Common myeloid progenitor, CD34-positive (primary cell): ENCODE measurements at regions of chr22 and their contacts with region 1.

Region 1: GRCh38 chr22:43346521-43346929 is 3.4 kb upstream of the SCUBE1 start:
- DNase-seq: peak; percentile 50 to 59 (median 54)
- H3K4me3 ChIP-seq: no peak overlapping the region
- H3K27ac ChIP-seq: no peak overlapping the region
- H3K4me1 ChIP-seq: peaks cover 0 to 30% (median 14%) of the 10 kb centered on the region in 4 experiments
- H3K27me3 ChIP-seq: peaks cover 0 to 25% (median 14%) of the 10 kb centered on the region in 5 experiments

Region 2: GRCh38 chr22:43263645-43264514 is 82.6 kb before region 1 on chr22:
- CTCF ChIA-PET with region 1: interaction called, 141 read pairs
- POLR2A ChIA-PET with region 1: no interaction called
- DNase-seq: peak; percentile 99
- H3K4me3 ChIP-seq: peak overlapping the region in 5 of 7 experiments; percentile 21 to 61 (median 50)
- H3K27ac ChIP-seq: peak overlapping the region; percentile 95
- H3K4me1 ChIP-seq: peaks cover 13 to 86% (median 62%) of the 10 kb centered on the region in 4 experiments
- H3K27me3 ChIP-seq: no peaks in the 10 kb centered on the region

Region 3: DNA sequence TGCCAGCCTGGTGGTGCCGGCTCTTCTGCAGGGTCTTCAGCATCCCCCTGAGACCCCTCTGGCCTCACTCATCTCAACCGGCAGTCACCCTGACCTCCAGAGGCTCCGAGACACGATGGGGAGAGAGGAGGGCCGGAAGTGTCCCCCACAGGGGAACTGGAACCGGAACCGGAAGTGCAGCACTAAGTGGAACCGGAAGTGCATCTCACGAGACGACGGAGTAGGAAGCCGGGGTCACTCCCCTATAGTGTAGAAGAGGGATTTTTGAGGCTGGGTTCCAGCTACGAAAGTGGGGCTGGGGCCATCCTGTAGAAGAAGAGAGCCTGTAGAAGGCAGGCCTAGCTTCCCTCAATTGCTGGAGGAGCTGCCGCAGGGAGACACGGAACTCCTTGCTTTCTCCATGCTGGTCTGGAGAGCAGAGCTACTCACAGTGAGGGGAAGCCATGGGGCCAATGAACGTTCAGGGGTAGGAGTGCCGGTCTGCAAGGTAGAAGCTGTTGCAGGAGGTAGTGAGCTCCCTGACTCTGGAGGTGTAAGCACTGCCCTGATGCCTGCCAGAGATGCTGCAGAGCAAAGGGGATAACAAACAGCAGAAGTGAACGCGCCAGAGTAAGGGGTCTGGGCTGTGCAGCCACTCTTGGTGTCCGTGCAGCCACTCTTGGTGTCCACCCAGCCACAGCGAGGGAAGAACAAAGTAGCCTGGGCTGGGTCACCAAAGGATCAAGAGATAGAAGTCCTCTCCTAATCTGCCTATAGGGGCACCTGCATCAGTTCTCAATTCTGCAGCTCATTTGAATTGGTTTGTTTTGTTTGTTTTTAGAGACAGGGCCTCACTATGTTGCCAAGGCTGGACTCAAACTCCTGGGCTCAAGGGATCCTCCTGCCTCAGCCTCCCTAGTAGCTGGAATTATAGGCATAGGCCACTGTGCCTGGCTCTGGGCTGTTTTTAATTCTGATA is 25.3 kb before region 1 on chr22:
- CTCF ChIA-PET with region 1: interaction called, 16 read pairs
- POLR2A ChIA-PET with region 1: no interaction called
- DNase-seq: no peak
- H3K4me3 ChIP-seq: no peak overlapping the region
- H3K27ac ChIP-seq: no peak overlapping the region
- H3K4me1 ChIP-seq: peaks cover 0 to 9% (median 0%) of the 10 kb centered on the region in 4 experiments
- H3K27me3 ChIP-seq: peaks cover 0 to 2% (median 0%) of the 10 kb centered on the region in 5 experiments

Region 4: GRCh38 chr22:43363315-43364168 is 17.0 kb after region 1 on chr22:
- CTCF ChIA-PET with region 1: interaction called, 14 read pairs
- POLR2A ChIA-PET with region 1: interaction called, 3 read pairs
- DNase-seq: no peak
- H3K4me3 ChIP-seq: no peak overlapping the region
- H3K27ac ChIP-seq: no peak overlapping the region
- H3K4me1 ChIP-seq: no peaks in the 10 kb centered on the region
- H3K27me3 ChIP-seq: peaks cover 0 to 4% (median 0%) of the 10 kb centered on the region in 5 experiments

Region 5: GRCh38 chr22:43385770-43386641 is 39.5 kb after region 1 on chr22:
- CTCF ChIA-PET with region 1: interaction called, 26 read pairs
- POLR2A ChIA-PET with region 1: interaction called, 4 read pairs
- DNase-seq: peak; percentile 74 to 87 (median 86)
- H3K4me3 ChIP-seq: peak overlapping the region in 2 of 7 experiments; percentile 11 to 45
- H3K27ac ChIP-seq: no peak overlapping the region
- H3K4me1 ChIP-seq: peaks cover 0 to 24% (median 19%) of the 10 kb centered on the region in 4 experiments
- H3K27me3 ChIP-seq: peaks cover 0 to 5% (median 0%) of the 10 kb centered on the region in 5 experiments